HCT116 (cell line): ENCODE measurements at regions of chr12 and their contacts with region 1.

Region 1: DNA sequence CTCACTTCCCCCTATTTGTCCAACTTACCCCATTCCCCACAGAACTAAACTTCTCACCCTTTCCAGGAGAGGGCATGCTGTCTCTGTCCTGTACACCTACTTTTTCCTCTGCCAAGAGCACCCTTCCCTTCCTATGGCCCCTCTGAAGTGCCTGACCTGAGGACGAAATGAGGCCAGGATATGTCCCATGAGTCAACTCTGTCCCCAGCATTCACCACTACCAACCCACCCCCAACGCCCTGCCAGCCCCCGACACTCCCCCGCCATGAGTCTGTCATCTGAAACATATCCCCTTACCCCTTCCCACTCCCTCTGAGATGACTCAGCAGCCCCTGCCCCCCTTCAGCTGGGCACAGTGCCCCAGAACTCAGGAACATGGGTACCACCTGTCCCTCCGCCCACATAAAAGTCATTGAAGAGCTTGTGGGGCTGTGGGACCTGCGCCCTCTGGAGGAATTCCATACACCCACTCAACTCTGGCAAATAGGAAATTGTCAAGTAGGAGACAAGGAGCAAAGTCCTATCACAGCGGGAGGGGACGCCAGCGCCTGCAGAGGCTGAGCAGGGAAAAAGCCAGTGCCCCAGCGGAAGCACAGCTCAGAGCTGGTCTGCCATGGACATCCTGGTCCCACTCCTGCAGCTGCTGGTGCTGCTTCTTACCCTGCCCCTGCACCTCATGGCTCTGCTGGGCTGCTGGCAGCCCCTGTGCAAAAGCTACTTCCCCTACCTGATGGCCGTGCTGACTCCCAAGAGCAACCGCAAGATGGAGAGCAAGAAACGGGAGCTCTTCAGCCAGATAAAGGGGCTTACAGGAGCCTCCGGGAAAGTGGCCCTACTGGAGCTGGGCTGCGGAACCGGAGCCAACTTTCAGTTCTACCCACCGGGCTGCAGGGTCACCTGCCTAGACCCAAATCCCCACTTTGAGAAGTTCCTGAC is 26.3 kb downstream of the ITGA7 start:
- DNase-seq: peak; percentile 87
- ATAC-seq: peak; percentile 87
- H3K4me3 ChIP-seq: peak overlapping the region; percentile 77 to 78
- H3K27ac ChIP-seq: peak overlapping the region; percentile 77
- H3K4me1 ChIP-seq: peaks cover 9 to 27% of the 10 kb centered on the region in 2 experiments
- H3K27me3 ChIP-seq: no peaks in the 10 kb centered on the region
- CTCF ChIP-seq: peak; percentile 59 to 74 (median 62)
- POLR2A ChIP-seq: peak; percentile 23
- RAD21 ChIP-seq: peak; percentile 62

Region 2: GRCh38 chr12:55642669-55643068 is 38.7 kb before region 1 on chr12:
- CTCF ChIA-PET with region 1: interaction called, 7 read pairs
- POLR2A ChIA-PET with region 1: no interaction called
- RAD21 ChIA-PET with region 1: interaction called in 1 of 2 experiments, 3 read pairs
- intact Hi-C with region 1: loop called (anchors 1 kb)
- DNase-seq: no peak
- ATAC-seq: no peak
- H3K4me3 ChIP-seq: no peak overlapping the region
- H3K27ac ChIP-seq: no peak overlapping the region
- H3K4me1 ChIP-seq: peaks cover 0 to 17% of the 10 kb centered on the region in 2 experiments; a peak in 2 of 4 replicates
- H3K27me3 ChIP-seq: peaks cover 13% of the 10 kb centered on the region; the same call in 1 of the 2 replicates
- CTCF ChIP-seq: no peak
- POLR2A ChIP-seq: no peak
- RAD21 ChIP-seq: no peak

Region 3: DNA sequence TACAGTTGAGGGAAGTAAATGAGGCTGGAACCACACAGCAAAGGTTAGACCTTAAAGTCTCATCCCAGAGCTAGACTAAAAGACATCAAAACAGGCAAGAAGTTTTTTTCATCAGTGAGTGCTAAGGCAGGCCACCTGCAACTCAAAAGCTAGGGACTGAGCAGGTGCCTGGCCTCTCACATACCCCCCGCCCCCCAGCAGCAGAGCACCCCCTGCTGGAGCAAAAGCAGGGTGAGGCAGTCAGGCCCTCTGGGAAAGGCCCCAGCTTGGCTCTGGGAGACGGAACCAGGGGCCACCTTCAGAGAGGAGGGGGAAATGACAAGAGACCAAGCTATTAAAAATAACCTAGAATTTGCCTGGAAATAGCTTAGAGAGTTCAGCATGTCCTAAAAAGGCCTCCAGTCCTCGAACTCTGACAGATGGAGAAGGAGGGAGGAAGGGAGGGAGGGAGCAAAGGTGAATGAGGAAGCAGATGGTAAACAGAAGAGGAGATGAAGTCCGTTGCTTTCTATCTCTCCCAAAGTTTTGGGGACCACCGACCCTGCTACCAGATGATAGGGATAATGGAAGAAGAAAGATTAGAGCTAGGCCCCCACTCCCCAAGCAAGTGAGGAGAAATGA is 24.5 kb after region 1 on chr12:
- CTCF ChIA-PET with region 1: interaction called, 19 read pairs
- POLR2A ChIA-PET with region 1: no interaction called
- RAD21 ChIA-PET with region 1: no interaction called
- intact Hi-C with region 1: no loop called
- DNase-seq: no peak
- ATAC-seq: peak; percentile 63
- H3K4me3 ChIP-seq: no peak overlapping the region
- H3K27ac ChIP-seq: no peak overlapping the region
- H3K4me1 ChIP-seq: peaks cover 4 to 15% of the 10 kb centered on the region in 2 experiments; a peak in 3 of 4 replicates
- H3K27me3 ChIP-seq: peaks cover 15% of the 10 kb centered on the region; the same call in 1 of the 2 replicates
- CTCF ChIP-seq: peak; percentile 67 to 70 (median 69); a peak in 5 of 6 replicates
- POLR2A ChIP-seq: no peak
- RAD21 ChIP-seq: peak; percentile 42; the same call in 1 of the 2 replicates

Region 4: GRCh38 chr12:55715833-55716581 is 34.6 kb after region 1 on chr12 and contains the start of gene BLOC1S1:
- CTCF ChIA-PET with region 1: interaction called, 21 read pairs
- POLR2A ChIA-PET with region 1: no interaction called
- RAD21 ChIA-PET with region 1: interaction called, 4 to 10 read pairs
- intact Hi-C with region 1: loop called (anchors 1 kb)
- DNase-seq: peak; percentile 94
- ATAC-seq: peak; percentile 90
- H3K4me3 ChIP-seq: peak within 1 kb of the TSS; percentile 75 to 94
- H3K27ac ChIP-seq: peak within 1 kb of the TSS; percentile 84
- H3K4me1 ChIP-seq: peaks cover 27 to 48% of the 10 kb centered on the region in 2 experiments
- H3K27me3 ChIP-seq: peaks cover 11% of the 10 kb centered on the region; the same call in 1 of the 2 replicates
- CTCF ChIP-seq: no peak
- POLR2A ChIP-seq: peak; percentile 49
- RAD21 ChIP-seq: no peak
- total RNA-seq, gene BLOC1S1: 85.5 TPM

Region 5: DNA sequence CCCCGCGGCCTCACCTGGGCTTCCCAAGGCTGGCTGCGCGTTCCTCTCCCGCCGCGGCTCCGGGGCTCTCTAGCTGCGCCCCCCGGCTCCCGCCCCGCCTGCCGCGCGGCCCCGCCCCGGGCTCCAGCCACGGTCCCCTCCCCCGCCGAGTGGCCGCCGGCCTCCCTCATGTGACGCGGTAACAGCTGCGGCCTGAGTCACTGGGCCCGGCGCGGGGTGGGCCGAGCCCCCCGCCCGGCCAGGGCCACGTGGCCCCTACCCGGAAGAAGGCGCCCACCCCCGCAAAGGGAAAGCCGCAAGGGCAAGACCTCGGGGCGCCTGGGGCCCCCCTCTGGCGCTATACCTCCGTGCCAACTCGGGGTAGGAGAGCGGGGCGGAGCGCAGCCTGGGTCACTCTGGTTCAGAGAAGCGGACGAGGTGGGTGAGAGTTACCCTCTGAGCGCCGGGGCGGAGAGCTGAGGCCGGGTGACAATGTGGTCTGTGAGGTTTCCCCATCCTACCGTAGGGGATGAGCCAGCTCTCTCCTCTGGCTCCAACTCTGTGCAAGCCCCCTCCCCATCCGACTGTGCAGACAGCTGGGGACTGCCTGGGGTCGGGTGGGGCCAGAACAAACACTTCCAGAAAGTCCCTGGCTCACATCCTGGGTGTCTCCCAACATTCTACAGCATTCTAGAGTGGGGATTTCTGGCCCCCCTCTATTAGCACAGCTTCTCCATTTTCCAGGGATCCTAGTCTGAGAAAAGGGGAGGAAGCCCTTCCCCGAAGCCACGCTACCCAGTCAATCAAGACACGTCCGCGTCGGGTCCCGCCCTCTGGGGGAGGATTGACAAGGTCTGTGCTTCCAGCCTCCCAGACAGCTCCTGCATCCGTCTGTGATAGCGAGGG is 47.8 kb after region 1 on chr12 and contains the start of gene CD63:
- CTCF ChIA-PET with region 1: interaction called, 12 read pairs
- POLR2A ChIA-PET with region 1: interaction called, 5 read pairs
- RAD21 ChIA-PET with region 1: interaction called in 1 of 2 experiments, 3 read pairs
- intact Hi-C with region 1: no loop called
- DNase-seq: peak; percentile 68
- ATAC-seq: peak; percentile 83
- H3K4me3 ChIP-seq: peak within 1 kb of the TSS; percentile 88 to 96
- H3K27ac ChIP-seq: peak within 1 kb of the TSS; percentile 94
- H3K4me1 ChIP-seq: peaks cover 19 to 55% of the 10 kb centered on the region in 2 experiments
- H3K27me3 ChIP-seq: no peaks in the 10 kb centered on the region
- CTCF ChIP-seq: no peak
- POLR2A ChIP-seq: no peak
- RAD21 ChIP-seq: no peak
- total RNA-seq, gene CD63: 355 TPM